Kidney (tissue), 22 donors: ENCODE measurements at regions of chr5 and their contacts with region 1.

Region 1: GRCh38 chr5:170420780-170421412 is 31.7 kb upstream of the KCNMB1 start:
- DNase-seq: peak in 4 of 5 donors; percentile 74 to 89 (median 81)
- H3K4me3 ChIP-seq: no peak overlapping the region
- H3K27ac ChIP-seq: no peak overlapping the region
- H3K4me1 ChIP-seq: no peaks in the 10 kb centered on the region
- H3K27me3 ChIP-seq: no peaks in the 10 kb centered on the region
- CTCF ChIP-seq: peak; percentile 70

Region 2: DNA sequence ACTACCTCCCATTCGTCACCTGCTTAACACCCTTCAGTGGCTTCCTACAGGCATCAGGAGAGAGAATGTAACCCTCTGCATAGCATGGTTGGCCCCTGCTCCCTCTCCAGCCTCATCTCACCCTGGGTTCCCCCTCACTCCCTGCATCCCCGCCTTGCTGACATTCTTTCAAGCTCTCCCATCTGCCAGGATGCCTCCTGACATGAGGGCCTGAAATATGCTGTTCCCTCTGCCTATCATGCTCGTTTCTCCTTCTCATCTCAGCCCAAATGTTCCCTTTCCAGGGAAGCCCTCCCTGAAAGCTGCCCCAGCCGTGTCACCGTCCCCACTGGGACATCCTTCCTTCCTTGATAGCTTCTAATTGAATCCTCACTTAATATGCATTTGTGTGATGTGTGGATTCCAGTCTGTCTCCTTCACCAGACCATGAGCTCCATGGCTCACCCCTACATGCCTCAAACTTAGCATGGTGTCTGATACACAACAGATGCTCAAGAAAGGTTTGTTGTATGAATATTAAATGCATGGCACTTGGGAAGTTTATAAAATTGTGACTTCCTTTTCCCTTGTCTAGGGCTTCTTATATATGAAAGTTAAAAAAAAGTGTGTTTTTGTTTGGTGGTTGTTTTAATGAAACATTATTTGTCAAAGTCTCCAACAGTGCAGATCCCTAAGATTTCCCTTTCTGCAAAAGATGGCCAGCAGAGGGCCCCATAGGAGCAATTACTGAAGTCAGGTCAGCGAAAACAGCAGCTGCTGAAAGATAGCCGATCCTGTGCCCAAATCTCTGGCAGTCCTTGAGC is 195.4 kb before region 1 on chr5:
- intact Hi-C with region 1: loop called (anchors 5 kb)
- DNase-seq: peak; percentile 75 to 92 (median 78)
- H3K4me3 ChIP-seq: no peak overlapping the region
- H3K27ac ChIP-seq: no peak overlapping the region
- H3K4me1 ChIP-seq: no peaks in the 10 kb centered on the region
- H3K27me3 ChIP-seq: no peaks in the 10 kb centered on the region
- CTCF ChIP-seq: peak; percentile 77

Region 3: GRCh38 chr5:170614720-170615119 is 193.8 kb after region 1 on chr5:
- intact Hi-C with region 1: no loop called
- DNase-seq: peak in 1 of 5 donors; percentile 38
- H3K4me3 ChIP-seq: no peak overlapping the region
- H3K27ac ChIP-seq: no peak overlapping the region
- H3K4me1 ChIP-seq: no peaks in the 10 kb centered on the region
- H3K27me3 ChIP-seq: no peaks in the 10 kb centered on the region
- CTCF ChIP-seq: no peak

Region 4: DNA sequence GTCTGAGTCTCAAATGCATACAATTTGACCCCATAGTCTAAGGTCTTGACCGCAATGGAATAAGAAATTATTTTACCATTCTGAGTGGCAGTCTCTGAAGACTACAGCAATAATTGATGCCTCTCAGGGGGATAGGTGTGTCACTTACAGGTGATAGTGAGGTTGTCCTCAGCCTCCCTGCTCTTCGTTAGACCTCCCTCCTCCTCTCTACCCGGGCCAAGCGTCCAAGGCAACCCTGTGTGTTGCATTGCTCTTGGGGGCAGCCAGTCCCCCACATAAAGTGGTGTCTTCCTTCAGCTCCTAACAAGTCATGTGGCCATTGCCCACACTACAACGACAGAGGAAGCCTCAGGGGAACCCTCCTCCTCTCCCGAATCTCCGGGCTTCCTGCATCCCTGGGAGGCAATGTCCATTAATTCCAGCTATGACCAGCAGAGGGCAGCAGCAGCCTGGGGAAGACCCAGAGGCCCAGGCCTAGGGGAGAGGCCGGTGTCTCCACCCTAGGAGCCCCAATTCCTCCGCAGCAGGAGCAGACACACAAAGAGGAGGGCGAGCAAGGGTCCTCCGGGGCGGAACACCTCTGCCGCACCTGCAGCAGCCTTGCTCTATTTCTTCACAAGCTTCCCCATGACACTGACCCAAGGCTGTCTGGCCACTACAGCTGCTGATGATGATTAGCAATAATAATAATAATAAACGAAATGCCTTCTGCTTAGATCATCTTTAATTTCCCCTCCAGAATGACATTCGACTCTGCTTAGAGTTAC is 217.7 kb after region 1 on chr5:
- intact Hi-C with region 1: no loop called
- DNase-seq: peak in 4 of 5 donors; percentile 64 to 84 (median 78)
- H3K4me3 ChIP-seq: no peak overlapping the region
- H3K27ac ChIP-seq: no peak overlapping the region
- H3K4me1 ChIP-seq: peaks cover 0 to 10% (median 8%) of the 10 kb centered on the region in 3 donors
- H3K27me3 ChIP-seq: no peaks in the 10 kb centered on the region
- CTCF ChIP-seq: peak; percentile 83